Activated CD8-positive, alpha-beta T cell treated with anti-CD3 and anti-CD28 coated beads, Interleukin-2, amount 10 ng/mL, durations not matched to agents 7 days and 5 days (primary cell): ENCODE measurements at regions of chr2 and their contacts with region 1.

Region 1: GRCh38 chr2:162221064-162221463 is 22.2 kb downstream of the FAP start:
- DNase-seq: peak; percentile 72
- ATAC-seq: peak; percentile 60
- H3K4me3 Mint-ChIP-seq: no peak overlapping the region
- H3K27ac Mint-ChIP-seq: no peak overlapping the region
- H3K4me1 Mint-ChIP-seq: peaks cover 4% of the 10 kb centered on the region
- H3K27me3 Mint-ChIP-seq: peaks cover 34% of the 10 kb centered on the region

Region 2: GRCh38 chr2:162188451-162188850 is 32.6 kb before region 1 on chr2:
- CTCF ChIA-PET with region 1: interaction called, 12 read pairs
- POLR2A ChIA-PET with region 1: no interaction called
- DNase-seq: no peak
- ATAC-seq: no peak
- H3K4me3 Mint-ChIP-seq: no peak overlapping the region
- H3K27ac Mint-ChIP-seq: no peak overlapping the region
- H3K4me1 Mint-ChIP-seq: no peaks in the 10 kb centered on the region
- H3K27me3 Mint-ChIP-seq: peaks cover 22% of the 10 kb centered on the region

Region 3: GRCh38 chr2:162244541-162245031 is 23.5 kb after region 1 on chr2:
- CTCF ChIA-PET with region 1: interaction called, 33 read pairs
- POLR2A ChIA-PET with region 1: no interaction called
- DNase-seq: no peak
- ATAC-seq: no peak
- H3K4me3 Mint-ChIP-seq: no peak overlapping the region
- H3K27ac Mint-ChIP-seq: no peak overlapping the region
- H3K4me1 Mint-ChIP-seq: no peaks in the 10 kb centered on the region
- H3K27me3 Mint-ChIP-seq: peaks cover 48% of the 10 kb centered on the region

Region 4: DNA sequence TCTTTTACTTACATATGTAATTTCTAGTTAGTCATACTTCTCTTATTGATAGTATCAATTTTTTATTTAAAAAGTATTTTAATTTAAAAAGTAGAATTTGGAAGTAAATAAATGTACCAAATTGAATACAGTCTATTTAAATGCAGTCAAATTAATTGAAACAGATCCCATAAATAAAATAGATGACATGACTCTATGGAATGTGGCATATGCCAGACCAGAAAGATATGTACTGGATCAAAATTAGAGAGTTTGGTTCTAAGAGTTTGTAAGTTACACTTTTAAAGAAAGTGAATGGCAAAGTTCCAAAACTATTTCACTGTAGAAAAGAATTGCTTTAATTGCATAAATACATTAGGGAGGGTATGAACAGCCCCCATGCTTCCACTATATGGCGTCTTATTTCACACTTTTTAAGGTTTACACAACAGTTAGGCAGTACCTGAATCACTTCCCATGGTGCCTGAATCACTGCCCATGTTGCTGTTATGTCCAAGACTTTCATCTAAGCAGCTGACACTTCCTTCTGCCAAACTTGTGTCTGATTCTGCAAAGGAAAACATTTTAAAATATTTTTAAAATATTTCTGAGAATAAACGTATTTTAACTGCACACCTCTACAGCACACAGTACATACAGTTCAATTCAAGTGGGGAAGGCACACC is 72.2 kb after region 1 on chr2:
- CTCF ChIA-PET with region 1: interaction called, 253 read pairs
- POLR2A ChIA-PET with region 1: interaction called, 5 read pairs
- DNase-seq: no peak
- ATAC-seq: no peak
- H3K4me3 Mint-ChIP-seq: no peak overlapping the region
- H3K27ac Mint-ChIP-seq: no peak overlapping the region
- H3K4me1 Mint-ChIP-seq: no peaks in the 10 kb centered on the region
- H3K27me3 Mint-ChIP-seq: no peaks in the 10 kb centered on the region

Region 5: DNA sequence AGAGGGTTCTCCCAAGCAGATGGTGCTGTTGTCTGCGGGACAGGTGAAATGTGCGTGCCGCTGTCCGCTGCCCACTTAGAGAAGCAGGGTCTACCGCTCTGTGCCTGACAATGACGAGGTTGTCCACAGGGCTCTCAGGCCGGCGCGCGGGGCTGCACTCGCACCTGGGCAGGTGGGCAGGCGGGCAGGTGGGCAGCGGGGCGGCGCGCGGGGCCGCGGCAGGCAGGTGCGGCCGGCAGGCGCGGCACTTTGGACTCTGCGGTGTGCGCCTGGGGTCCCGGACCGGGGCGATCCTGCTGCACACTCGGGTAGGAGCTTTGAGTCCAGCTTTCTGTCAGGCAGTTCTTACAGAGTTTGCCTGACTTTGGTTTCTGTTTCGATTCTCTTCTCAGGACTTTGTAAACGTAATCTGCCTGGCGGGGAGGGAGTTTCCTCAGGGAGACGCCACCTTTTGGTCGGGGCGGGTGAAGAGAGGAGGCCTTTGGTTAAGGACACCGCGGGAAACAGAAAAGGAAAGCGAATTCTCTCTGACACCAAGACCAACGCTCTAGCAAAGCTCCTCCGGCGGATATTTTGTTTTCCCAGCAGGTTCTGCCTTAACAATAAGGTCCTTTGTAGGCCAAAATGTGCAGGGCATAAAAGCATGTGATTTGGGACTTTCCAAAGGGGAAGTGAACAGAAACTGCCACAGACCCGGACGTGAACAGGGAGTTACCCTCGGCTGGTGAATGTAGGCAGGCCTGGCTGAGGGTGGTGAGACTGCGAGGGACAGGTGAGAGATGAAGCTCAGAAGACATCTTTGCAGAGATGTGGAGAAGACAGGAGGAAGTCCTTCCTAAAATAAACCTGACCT is 97.5 kb after region 1 on chr2 and contains the start of gene IFIH1:
- CTCF ChIA-PET with region 1: interaction called, 14 read pairs
- POLR2A ChIA-PET with region 1: no interaction called
- DNase-seq: peak; percentile 82
- ATAC-seq: peak; percentile 87
- H3K4me3 Mint-ChIP-seq: peak within 1 kb of the TSS; percentile 95
- H3K27ac Mint-ChIP-seq: peak within 1 kb of the TSS; percentile 99
- H3K4me1 Mint-ChIP-seq: peaks cover 61% of the 10 kb centered on the region
- H3K27me3 Mint-ChIP-seq: no peaks in the 10 kb centered on the region
- total RNA-seq, gene IFIH1: 37.3 to 37.6 TPM